H1 (cell line): ENCODE measurements at regions of chr10 and their contacts with region 1.

Region 1: DNA sequence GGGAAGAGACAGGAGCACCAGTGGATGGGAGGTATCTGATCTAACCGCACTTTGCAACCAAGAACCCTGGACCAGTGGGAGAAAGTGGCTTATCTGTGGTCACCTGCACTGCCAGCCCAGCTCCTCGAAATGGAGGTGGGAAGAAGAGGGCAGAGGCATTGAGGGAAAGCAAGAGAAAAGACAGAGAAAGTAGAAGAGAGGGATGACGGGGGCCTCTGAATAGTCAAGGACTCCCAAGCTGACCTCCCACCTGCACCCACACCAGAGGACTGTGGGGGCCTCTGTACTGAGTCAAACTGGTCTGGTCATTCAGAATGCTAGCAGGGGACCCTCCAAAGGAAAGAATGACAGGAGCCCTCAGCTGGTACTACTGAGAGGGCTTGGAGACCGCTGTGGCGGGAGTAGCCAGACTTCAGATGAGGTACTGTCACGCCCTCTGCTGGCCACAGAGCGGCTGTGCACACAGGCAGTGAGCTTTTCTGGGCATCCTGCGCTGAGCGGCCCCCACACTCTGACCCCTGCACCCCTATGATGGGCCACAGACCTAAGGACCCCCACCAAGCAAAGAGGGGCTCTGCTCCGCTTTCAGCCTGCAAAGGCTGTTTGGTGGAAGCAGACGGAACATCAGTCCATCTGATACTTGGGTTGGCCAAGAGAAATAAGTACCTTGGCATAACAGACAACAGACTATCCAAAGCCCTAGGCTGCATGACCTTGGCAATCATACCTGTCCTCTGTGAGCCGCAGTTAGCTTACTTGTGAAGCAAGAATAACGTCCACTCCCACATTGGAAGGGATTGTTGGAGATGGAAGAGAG is 112.9 kb downstream of the COL13A1 start:
- DNase-seq: peak; percentile 27 to 93
- H3K4me3 ChIP-seq: no peak overlapping the region
- H3K27ac ChIP-seq: no peak overlapping the region
- H3K4me1 ChIP-seq: peaks cover 0 to 5% (median 2%) of the 10 kb centered on the region in 4 experiments; a peak in 4 of 7 replicates
- H3K27me3 ChIP-seq: peaks cover 0 to 3% (median 0%) of the 10 kb centered on the region in 4 experiments; a peak in 2 of 7 replicates
- CTCF ChIP-seq: peak; percentile 96 to 99 (median 96)
- EP300 ChIP-seq: no peak
- POLR2A ChIP-seq: no peak
- RAD21 ChIP-seq: peak; percentile 96 to 97

Region 2: DNA sequence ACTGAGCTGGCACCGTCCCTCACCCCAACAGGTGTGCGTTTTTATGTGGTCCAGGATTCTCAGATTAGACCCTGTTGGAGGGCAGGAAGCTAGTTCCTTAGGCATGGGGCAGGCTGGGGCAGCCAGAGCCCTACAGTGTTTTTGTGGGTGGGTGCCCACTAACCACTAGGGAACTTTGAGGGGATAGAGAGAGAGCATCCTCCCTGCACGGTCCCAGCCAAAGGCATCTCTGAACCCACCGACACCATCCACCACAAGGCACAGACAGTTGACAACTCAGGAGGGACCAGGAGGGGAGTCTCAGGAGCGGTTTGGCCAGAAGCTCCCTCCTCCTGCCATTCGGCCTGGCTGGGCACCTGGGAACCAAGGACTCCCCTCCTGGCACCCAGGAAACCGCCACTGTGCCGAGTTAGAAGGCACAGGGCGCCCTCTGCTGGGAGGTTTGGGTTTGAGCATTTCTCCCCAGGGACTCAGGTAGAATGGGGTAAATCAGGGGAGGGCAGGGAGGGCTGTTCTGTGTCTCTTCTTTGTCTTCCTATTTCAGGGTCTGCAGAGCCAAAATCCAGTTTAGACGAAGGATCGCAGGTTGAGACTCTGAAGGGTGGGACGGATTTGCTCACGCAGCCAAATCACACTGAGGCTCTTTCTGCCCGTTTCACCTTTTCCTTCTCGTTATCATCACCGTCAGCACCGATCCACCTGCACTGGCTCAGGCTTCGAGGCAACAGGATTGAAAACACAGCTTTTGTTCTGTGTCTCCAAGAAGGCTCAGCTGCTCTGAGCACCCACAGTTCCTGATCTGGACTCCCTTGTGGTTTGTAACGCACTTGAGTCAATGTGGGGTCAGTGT is 197.7 kb before region 1 on chr10:
- CTCF ChIA-PET with region 1: interaction called, 16 read pairs
- POLR2A ChIA-PET with region 1: no interaction called
- DNase-seq: peak; percentile 46 to 93
- H3K4me3 ChIP-seq: no peak overlapping the region
- H3K27ac ChIP-seq: no peak overlapping the region
- H3K4me1 ChIP-seq: peaks cover 0 to 2% (median under 1%) of the 10 kb centered on the region in 4 experiments; a peak in 3 of 7 replicates
- H3K27me3 ChIP-seq: no peaks in the 10 kb centered on the region
- CTCF ChIP-seq: peak; percentile 81 to 98 (median 89)
- EP300 ChIP-seq: no peak
- POLR2A ChIP-seq: no peak
- RAD21 ChIP-seq: peak; percentile 96 to 99

Region 3: GRCh38 chr10:69780077-69780476 is 134.5 kb before region 1 on chr10:
- CTCF ChIA-PET with region 1: interaction called, 321 read pairs
- POLR2A ChIA-PET with region 1: no interaction called
- DNase-seq: no peak
- H3K4me3 ChIP-seq: no peak overlapping the region
- H3K27ac ChIP-seq: no peak overlapping the region
- H3K4me1 ChIP-seq: no peaks in the 10 kb centered on the region
- H3K27me3 ChIP-seq: peaks cover 0 to 5% (median under 1%) of the 10 kb centered on the region in 4 experiments; a peak in 2 of 7 replicates
- CTCF ChIP-seq: no peak
- EP300 ChIP-seq: no peak
- POLR2A ChIP-seq: no peak
- RAD21 ChIP-seq: no peak

Region 4: DNA sequence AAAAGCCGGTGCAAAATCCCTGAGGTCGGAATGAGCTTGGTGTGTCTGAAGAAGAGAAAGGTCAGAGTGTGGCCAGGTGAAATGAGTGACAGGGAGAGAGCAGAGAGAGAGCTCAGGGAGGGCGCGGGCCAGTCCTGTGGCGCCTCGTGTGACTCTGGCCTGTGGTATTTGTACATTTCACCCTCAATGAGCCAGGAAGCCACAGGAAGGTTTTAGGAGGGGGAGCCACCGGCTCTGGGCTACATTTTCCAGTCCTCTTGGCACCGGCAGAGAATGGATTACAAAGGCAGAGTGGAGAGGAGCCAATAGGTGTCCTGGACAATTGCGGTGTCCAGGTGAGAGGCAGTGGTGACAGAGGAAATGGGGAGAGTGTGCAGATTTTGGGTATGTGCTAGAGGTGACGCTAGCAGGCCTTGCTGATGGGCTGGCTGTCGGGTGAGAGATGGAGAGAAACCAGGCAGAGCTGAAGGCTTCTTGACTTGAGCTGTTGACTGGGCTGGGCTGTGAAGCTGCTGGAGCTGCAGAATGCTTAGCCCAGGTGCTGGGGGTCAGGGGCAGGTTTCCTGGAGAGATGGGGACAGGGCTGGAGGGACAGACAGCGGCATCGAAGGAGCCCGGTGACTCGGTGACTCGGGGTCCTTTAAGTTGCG is 74.8 kb before region 1 on chr10:
- CTCF ChIA-PET with region 1: interaction called, 29 read pairs
- POLR2A ChIA-PET with region 1: no interaction called
- DNase-seq: no peak
- H3K4me3 ChIP-seq: no peak overlapping the region
- H3K27ac ChIP-seq: no peak overlapping the region
- H3K4me1 ChIP-seq: peaks cover 8 to 31% (median 21%) of the 10 kb centered on the region in 4 experiments
- H3K27me3 ChIP-seq: peaks cover 0 to 2% (median 0%) of the 10 kb centered on the region in 4 experiments; a peak in 1 of 7 replicates
- CTCF ChIP-seq: no peak
- EP300 ChIP-seq: no peak
- POLR2A ChIP-seq: no peak
- RAD21 ChIP-seq: no peak

Region 5: GRCh38 chr10:69878038-69878437 is 36.6 kb before region 1 on chr10:
- CTCF ChIA-PET with region 1: interaction called, 60 read pairs
- POLR2A ChIA-PET with region 1: no interaction called
- DNase-seq: no peak
- H3K4me3 ChIP-seq: no peak overlapping the region
- H3K27ac ChIP-seq: no peak overlapping the region
- H3K4me1 ChIP-seq: peaks cover 9 to 41% (median 27%) of the 10 kb centered on the region in 4 experiments
- H3K27me3 ChIP-seq: no peaks in the 10 kb centered on the region; a peak in 3 of 7 replicates
- CTCF ChIP-seq: no peak
- EP300 ChIP-seq: no peak
- POLR2A ChIP-seq: no peak
- RAD21 ChIP-seq: no peak

Region 6: GRCh38 chr10:69936091-69936490 is 21.5 kb after region 1 on chr10:
- CTCF ChIA-PET with region 1: interaction called, 14 read pairs
- POLR2A ChIA-PET with region 1: no interaction called
- DNase-seq: no peak
- H3K4me3 ChIP-seq: no peak overlapping the region
- H3K27ac ChIP-seq: no peak overlapping the region
- H3K4me1 ChIP-seq: no peaks in the 10 kb centered on the region
- H3K27me3 ChIP-seq: no peaks in the 10 kb centered on the region
- CTCF ChIP-seq: peak; percentile 60 to 70 (median 67)
- EP300 ChIP-seq: no peak
- POLR2A ChIP-seq: no peak
- RAD21 ChIP-seq: peak; percentile 62 to 75

Region 7: GRCh38 chr10:70115948-70116682 is 201.5 kb after region 1 on chr10:
- CTCF ChIA-PET with region 1: interaction called, 11 read pairs
- POLR2A ChIA-PET with region 1: no interaction called
- DNase-seq: peak in 1 of 2 experiments; percentile 84
- H3K4me3 ChIP-seq: no peak overlapping the region
- H3K27ac ChIP-seq: no peak overlapping the region
- H3K4me1 ChIP-seq: no peaks in the 10 kb centered on the region; a peak in 1 of 7 replicates
- H3K27me3 ChIP-seq: no peaks in the 10 kb centered on the region
- CTCF ChIP-seq: peak; percentile 69 to 90 (median 88)
- EP300 ChIP-seq: no peak
- POLR2A ChIP-seq: no peak
- RAD21 ChIP-seq: peak; percentile 50 to 64